PC-9 (cell line): ENCODE measurements at regions of chr1 and their contacts with region 1.

Region 1: DNA sequence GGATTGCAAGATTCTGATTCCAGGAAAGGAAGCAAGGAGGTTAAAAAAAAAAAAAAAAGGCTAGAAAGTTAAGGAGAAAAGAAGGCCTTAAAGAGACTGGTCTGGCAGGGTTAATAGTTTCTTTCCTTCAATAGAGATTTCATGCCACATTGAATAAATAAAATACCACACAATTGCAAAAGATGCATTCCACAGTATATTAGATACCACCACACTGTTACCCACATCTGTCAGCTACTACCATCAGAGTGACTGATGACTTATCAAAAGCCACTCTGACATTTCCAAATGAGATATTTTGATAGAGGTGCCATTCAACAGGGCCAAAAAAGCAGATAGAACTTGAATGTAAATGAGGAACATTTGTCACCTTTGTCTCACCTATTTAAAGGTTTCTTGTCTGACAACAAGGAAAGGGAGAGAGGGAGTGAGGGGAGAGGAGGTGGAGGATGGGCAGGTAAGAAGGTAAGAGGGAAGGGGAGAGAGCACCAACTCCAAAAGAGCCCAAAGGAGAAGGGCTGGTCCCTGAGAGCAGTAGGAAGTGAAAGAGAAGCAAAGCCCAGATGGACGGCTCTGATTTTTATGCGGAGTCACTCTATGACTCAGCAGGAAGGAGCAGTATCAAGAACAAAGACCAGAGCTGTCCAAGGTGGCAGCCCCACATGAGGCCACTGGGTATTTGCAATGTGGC is 38.3 kb downstream of the LRRN2 start:
- DNase-seq: peak; percentile 71 to 92
- H3K4me3 ChIP-seq: no peak overlapping the region
- H3K27ac ChIP-seq: peak overlapping the region; percentile 90
- H3K4me1 ChIP-seq: peaks cover 27% of the 10 kb centered on the region
- H3K27me3 ChIP-seq: no peaks in the 10 kb centered on the region
- CTCF ChIP-seq: no peak

Region 2: GRCh38 chr1:204565617-204566582 is 81.4 kb before region 1 on chr1:
- CTCF ChIA-PET with region 1: no interaction called
- POLR2A ChIA-PET with region 1: no interaction called
- intact Hi-C with region 1: loop called (anchors 1 kb)
- DNase-seq: peak; percentile 58 to 94
- H3K4me3 ChIP-seq: no peak overlapping the region
- H3K27ac ChIP-seq: peak overlapping the region; percentile 36
- H3K4me1 ChIP-seq: peaks cover 23% of the 10 kb centered on the region
- H3K27me3 ChIP-seq: no peaks in the 10 kb centered on the region
- CTCF ChIP-seq: peak; percentile 89

Region 3: DNA sequence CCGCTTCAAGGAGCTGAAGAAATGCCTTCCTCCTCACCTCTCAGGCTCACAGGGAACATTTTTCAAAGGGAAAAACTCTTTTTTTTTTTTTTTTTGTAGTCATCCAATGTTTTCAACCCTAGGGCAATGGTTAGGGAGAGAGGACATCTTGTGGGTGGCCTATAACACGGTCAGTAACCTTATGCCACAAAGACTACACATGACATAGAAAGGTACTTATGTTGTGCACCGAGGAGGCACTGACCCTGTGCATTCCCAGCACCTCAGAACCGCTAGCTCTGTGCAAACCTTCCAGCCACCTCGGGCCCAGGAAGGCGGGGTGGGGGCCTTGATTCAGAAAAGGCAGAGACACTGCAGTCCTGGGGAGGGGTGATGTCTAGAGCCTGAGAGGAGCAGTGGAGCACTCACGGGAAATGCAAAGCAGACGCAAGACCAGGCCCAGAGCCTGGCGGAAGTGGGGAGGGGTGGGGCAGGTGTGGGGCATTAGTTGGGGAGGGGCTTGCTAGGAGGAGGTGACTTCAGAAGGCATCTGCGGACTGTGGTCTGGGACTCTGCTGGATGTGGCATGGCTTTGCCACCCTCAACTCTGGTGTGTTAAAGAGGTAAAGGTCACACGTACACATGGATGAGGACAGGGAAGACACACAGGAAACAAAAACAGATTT is 62.4 kb before region 1 on chr1:
- CTCF ChIA-PET with region 1: interaction called, 13 read pairs
- POLR2A ChIA-PET with region 1: no interaction called
- intact Hi-C with region 1: loop called (anchors 5 kb)
- DNase-seq: no peak
- H3K4me3 ChIP-seq: no peak overlapping the region
- H3K27ac ChIP-seq: no peak overlapping the region
- H3K4me1 ChIP-seq: peaks cover 21% of the 10 kb centered on the region
- H3K27me3 ChIP-seq: no peaks in the 10 kb centered on the region
- CTCF ChIP-seq: no peak

Region 4: DNA sequence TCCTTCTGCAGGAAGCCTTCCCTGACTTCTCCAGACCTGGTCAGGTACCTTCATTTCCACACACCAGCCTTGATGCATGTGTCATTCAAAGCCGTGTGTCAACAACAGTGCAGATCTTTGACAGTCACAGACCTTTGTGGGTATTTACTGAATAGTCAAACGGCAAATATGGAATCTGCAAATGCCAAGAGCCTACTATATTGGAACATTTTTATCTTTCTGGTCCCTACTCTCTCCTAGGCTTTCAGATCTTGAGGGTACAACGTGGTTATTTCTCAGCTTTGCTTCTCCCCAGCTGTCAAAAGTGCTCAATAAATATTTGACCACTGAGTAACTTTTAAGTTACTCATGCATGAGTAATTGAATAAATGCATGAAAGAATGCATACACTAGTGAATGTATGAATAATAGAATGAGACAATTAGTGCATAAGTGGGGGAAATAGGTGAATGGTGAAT is 55.6 kb before region 1 on chr1:
- CTCF ChIA-PET with region 1: interaction called, 13 read pairs
- POLR2A ChIA-PET with region 1: no interaction called
- intact Hi-C with region 1: loop called (anchors 5 kb)
- DNase-seq: peak in 1 of 2 experiments; percentile 74
- H3K4me3 ChIP-seq: no peak overlapping the region
- H3K27ac ChIP-seq: no peak overlapping the region
- H3K4me1 ChIP-seq: peaks cover 32% of the 10 kb centered on the region
- H3K27me3 ChIP-seq: no peaks in the 10 kb centered on the region
- CTCF ChIP-seq: no peak

Region 5: GRCh38 chr1:204623894-204624361 is 23.3 kb before region 1 on chr1:
- CTCF ChIA-PET with region 1: no interaction called
- POLR2A ChIA-PET with region 1: no interaction called
- intact Hi-C with region 1: loop called (anchors 1 kb)
- DNase-seq: no peak
- H3K4me3 ChIP-seq: no peak overlapping the region
- H3K27ac ChIP-seq: no peak overlapping the region
- H3K4me1 ChIP-seq: peaks cover 46% of the 10 kb centered on the region
- H3K27me3 ChIP-seq: peaks cover 3% of the 10 kb centered on the region; the same call in 1 of the 2 replicates
- CTCF ChIP-seq: no peak; the same call in 1 of the 2 replicates

Region 6: GRCh38 chr1:204711947-204712701 is 64.9 kb after region 1 on chr1:
- CTCF ChIA-PET with region 1: no interaction called
- POLR2A ChIA-PET with region 1: no interaction called
- intact Hi-C with region 1: loop called (anchors 1 kb)
- DNase-seq: no peak
- H3K4me3 ChIP-seq: no peak overlapping the region
- H3K27ac ChIP-seq: no peak overlapping the region
- H3K4me1 ChIP-seq: peaks cover 9% of the 10 kb centered on the region
- H3K27me3 ChIP-seq: peaks cover 5% of the 10 kb centered on the region; the same call in 1 of the 2 replicates
- CTCF ChIP-seq: no peak